ENCODE measurements at regions of chr1 and their contacts with region 1.

Region 1: GRCh38 chr1:196148367-196148970 is 459.8 kb downstream of the KCNT2 start:
- DNase-seq: no peak
- H3K4me3 Mint-ChIP-seq: no peak overlapping the region
- H3K27ac Mint-ChIP-seq: no peak overlapping the region
- H3K4me1 Mint-ChIP-seq: no peaks in the 10 kb centered on the region
- H3K27me3 Mint-ChIP-seq: no peaks in the 10 kb centered on the region

Region 2: DNA sequence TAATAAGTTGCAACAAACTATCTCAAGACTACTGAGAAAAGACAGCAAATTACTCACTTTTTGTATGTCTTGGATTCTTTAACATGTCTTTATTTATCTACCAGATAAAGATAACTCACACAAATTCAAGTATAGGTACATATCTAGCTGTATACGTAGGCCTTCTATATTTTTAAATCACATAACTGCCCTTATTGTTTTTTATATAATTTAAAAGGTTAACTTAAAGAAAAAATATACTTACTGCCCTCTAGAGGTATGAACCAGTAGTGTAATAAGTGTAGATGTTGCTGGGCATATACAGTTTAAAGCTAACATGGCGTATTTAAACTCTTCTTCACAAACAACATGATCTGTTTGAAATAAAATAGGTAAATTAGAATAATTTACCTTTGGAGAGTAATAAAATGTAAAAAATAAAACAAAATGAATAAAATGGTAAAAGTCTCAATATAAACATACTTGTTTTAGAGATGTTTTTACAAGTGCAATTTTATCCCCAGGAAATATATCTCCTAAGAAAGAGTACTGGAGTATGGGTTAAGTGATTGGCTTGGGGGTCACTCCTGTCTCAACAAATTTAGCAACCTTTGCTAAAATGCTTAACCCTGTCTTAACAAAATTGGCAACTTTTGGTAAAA is 224.5 kb after region 1 on chr1:
- intact Hi-C with region 1: loop called (anchors 5 kb)
- DNase-seq: no peak
- H3K4me3 Mint-ChIP-seq: no peak overlapping the region
- H3K27ac Mint-ChIP-seq: no peak overlapping the region
- H3K4me1 Mint-ChIP-seq: no peaks in the 10 kb centered on the region
- H3K27me3 Mint-ChIP-seq: no peaks in the 10 kb centered on the region

Region 3: DNA sequence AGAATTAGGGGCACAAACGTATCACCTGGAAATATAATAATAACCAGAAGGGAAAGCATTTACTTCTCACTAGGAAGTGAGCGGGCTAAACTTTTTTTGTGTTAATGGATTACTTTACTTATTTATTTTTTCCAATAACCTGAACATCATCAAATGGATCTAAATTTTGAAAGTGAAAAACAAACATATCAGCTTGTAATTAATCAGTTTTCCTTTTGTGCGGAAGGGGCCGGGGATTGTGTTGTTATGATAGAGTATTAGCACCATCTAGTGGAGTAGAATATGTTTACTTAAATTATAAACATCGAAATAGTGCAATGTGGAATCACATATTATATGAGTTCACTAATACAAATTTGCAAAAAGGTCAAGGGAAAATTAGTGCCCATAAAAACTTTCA is 512.4 kb after region 1 on chr1:
- intact Hi-C with region 1: loop called (anchors 1 kb)
- DNase-seq: no peak
- H3K4me3 Mint-ChIP-seq: no peak overlapping the region
- H3K27ac Mint-ChIP-seq: no peak overlapping the region
- H3K4me1 Mint-ChIP-seq: no peaks in the 10 kb centered on the region
- H3K27me3 Mint-ChIP-seq: no peaks in the 10 kb centered on the region

Measured in activated T-helper 2 cell treated with anti-CD3 and anti-CD28 coated beads, Interferon-gamma antibody, Interleukin-2, Interleukin-4, amounts not matched to agents 10 μg/mL and 5 μg/mL and 100 μg/mL, durations not matched to agents 14 hours and 24 hours and 36 hours (primary cell).